Left ventricle myocardium superior (tissue), 1 donor: ENCODE measurements at regions of chr11 and their contacts with region 1.

Region 1: DNA sequence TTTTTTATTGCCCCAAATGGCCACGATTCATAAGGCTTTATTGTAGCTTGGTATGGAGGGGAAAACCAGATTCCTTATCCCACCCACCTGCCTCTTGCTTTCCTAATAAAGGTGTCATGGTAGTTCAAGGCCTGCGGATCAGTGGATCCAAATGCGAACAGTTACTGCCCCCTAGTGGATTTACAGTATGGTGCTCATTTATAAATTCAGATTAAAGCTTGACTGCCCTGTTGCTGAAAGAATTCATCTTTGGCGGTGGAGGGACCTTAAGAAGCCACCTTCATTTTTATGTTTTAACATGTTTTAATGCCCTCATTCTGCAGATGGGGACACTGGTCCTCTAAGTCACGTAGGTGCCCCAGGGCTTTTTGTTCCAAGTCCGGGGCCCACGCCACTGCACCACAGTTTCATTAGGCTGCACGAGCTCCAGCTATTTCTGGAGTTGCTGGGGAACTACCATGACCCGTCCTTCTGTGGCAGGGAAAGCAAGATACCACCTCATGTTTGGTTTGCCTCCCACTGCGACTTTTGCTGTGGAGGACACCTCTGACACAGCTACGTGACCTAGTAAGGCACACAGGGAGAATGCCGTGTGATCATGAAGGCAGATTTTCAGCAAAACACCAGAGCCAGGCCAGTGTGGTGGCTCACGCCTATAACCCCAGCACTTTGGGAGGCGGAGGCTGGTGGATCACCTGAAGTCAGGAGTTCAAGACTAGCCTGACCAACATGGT is 15.6 kb upstream of the INCENP start:
- DNase-seq: no peak
- ATAC-seq: peak; percentile 32

Region 2: DNA sequence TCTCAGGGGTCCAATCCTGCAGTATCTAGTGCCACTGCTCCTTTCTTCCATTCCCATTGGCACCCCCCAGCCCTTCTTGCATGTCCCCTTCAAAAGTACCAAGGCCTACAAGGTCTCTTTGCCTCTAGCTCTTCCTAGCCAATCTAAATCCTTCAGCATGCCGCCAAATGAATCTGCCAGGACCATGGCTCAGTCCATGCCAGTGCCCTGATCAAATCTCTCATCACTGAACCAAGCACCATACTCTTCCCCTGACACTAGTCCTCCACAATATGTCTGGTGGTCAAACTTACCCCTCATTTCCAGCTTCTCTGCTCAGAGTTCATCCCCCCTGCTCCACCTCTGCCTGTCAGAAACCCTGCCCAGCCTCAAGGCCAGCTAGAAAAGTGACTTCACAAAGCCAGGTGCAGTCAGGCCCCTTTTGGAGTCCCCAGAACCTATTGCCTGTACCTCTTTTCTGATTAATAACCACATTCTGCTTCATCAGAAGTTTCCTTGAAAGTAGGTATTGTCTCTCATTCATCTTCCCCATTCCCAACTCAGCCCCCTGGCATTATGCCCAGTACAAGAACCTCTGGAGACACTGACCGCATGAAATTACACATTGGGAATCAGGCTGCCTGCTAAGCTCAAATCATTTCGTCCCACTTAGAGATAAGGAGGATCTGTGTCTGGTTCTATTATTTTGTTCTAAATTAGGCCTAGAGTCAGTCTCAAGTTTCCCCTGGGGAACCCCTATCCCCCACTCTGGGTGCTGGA is 304.1 kb before region 1 on chr11:
- intact Hi-C with region 1: loop called (anchors 10 kb)
- DNase-seq: no peak
- ATAC-seq: no peak

Region 3: DNA sequence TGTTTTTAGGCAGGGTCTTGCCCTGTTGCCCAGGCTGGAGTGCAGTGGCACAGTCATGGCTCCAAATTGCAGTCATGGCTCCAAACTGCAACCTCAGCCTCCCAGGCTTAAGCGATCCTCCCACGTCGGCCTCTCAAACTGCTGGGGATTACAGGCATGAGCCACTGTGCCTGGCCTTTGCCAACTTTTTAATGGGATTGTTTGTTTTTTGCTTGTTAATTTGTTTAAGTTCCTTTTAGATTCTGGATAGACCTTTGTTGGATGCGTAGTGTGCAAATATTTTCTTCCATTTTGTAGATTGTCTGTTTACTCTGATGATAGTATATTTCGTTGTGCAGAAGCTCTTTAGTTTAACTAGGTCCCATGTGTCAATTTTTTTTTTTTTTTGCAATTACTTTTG is 71.8 kb after region 1 on chr11:
- intact Hi-C with region 1: no loop called
- DNase-seq: no peak
- ATAC-seq: no peak